GM23248 (cell line): ENCODE measurements at regions of chrX and their contacts with region 1.

Region 1: GRCh38 chrX:130055103-130055502 is 55.2 kb downstream of the ELF4 start:
- DNase-seq: peak; percentile 74
- H3K4me3 ChIP-seq: no peak overlapping the region
- H3K27ac ChIP-seq: peak overlapping the region; percentile 42
- H3K4me1 ChIP-seq: peaks cover 8% of the 10 kb centered on the region; the same call in 1 of the 2 replicates
- H3K27me3 ChIP-seq: no peaks in the 10 kb centered on the region

Region 2: GRCh38 chrX:129606918-129607317 is 448.2 kb before region 1 on chrX:
- in situ Hi-C with region 1: loop called (anchors 10 kb)
- DNase-seq: peak; percentile 57
- H3K4me3 ChIP-seq: no peak overlapping the region
- H3K27ac ChIP-seq: no peak overlapping the region
- H3K4me1 ChIP-seq: no peaks in the 10 kb centered on the region
- H3K27me3 ChIP-seq: no peaks in the 10 kb centered on the region

Region 3: DNA sequence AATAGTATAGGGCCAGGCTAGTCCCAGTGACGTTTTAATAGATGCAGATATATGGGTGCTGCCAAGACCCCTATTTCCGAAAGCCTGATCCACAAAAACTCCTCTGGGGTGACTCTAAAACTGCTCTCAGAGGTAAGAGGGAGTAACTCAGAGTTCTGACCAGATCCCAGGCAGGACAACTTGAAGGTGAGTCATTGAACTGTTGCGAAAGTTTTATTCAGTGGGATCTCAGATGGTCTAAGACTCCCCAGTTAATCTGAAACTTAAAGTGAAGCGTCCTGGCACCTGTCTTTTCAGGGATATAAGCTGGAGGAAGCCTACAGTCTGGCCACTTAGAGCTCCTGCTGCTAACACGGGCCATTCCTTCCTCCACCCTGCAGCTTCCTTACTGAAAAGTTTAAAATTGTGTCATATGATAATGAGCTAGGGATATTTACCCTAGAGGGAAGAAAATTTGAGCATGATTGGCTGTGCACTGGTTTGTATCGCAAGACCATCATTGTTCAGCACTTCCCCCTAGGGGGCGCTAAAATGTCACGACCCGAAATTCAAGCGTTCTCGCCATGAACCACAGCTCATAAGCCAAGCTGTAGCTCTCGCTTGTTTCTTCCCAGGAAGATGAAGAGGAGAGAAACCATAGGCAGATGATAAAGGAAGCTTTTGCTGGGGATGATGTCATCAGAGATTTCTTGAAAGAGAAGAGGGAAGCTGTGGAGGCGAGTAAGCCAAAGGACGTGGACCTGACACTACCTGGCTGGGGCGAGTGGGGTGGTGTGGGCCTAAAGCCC is 129.6 kb before region 1 on chrX:
- in situ Hi-C with region 1: loop called (anchors 10 kb)
- DNase-seq: peak; percentile 76
- H3K4me3 ChIP-seq: no peak overlapping the region
- H3K27ac ChIP-seq: peak overlapping the region; percentile 51
- H3K4me1 ChIP-seq: peaks cover 7% of the 10 kb centered on the region; the same call in 1 of the 2 replicates
- H3K27me3 ChIP-seq: no peaks in the 10 kb centered on the region

Region 4: DNA sequence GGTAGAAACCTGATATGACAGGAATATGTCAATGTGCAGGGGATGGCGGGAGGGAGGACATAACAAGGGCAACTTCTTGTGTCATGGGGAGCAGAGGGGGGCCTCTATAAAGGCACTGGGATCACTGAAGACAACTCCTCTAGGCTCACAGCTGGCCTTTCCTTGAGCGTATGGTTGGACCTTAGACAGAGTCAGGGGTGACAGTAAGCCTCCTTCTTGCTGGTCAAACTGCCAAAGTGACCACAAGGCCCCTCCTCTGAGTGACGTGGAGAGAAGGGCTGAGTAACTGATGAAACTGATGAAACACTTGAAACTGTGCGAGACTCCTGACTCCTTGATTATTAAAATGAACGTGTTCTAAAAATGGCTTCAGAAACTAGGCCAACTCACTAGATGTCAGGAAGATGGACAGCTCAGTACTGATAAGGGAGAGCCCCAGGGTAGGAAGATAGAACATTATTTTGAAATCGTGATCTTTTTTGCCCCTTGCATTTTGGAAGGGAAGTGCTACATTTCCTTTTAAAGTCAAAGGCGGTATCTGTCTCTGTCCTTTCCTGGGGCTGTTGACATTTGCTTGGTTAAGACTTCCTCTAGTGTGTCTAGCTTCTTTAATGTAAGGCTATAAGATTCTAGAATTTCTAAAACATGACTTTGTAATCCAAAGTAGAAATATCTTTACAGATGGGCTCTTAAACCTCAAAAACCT is 118.2 kb after region 1 on chrX:
- in situ Hi-C with region 1: no loop called
- DNase-seq: peak; percentile 85
- H3K4me3 ChIP-seq: peak overlapping the region; percentile 40
- H3K27ac ChIP-seq: peak overlapping the region; percentile 99
- H3K4me1 ChIP-seq: peaks cover 17% of the 10 kb centered on the region
- H3K27me3 ChIP-seq: no peaks in the 10 kb centered on the region

Region 5: DNA sequence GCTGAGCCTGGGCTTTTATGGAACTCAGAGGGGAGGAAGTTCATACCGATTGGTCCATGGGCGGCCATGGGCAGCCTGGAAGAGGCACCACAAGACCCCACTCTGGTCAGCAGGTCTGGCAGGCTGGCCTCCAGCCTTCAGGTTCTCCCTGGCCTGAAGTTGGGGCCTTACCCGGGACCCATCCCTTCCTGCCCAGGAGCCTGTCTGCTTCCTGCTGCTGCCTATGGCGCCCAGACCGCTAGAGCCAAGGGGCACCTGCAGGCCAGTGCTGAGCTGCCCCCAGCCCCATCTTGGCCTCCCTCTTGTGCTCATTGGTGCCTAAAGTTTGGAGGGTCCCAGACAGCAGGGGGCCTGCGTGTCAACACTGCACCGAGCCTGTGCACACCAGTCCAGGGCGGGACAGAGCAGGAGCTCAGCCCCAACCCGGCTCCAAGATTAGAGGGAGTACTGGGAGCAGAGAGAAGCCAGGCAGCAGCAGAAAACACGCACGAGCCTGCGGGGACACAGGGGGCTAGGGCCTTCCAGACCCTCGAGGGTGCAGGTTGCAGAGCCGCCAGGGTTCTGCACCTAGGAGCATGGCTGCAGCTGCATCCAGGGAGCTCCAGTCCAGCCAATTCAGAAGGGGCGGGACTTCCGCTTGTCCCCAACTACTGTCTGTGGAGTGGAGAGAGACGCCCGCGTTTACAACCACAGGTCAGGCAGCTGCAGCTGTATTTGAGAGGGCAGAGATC is 244.3 kb after region 1 on chrX:
- in situ Hi-C with region 1: no loop called
- DNase-seq: no peak
- H3K4me3 ChIP-seq: no peak overlapping the region
- H3K27ac ChIP-seq: no peak overlapping the region
- H3K4me1 ChIP-seq: no peaks in the 10 kb centered on the region
- H3K27me3 ChIP-seq: no peaks in the 10 kb centered on the region